ENCODE measurements at regions of chr20 and their contacts with region 1.

Region 1: GRCh38 chr20:25057234-25058050 is 497 bp downstream of the ACSS1 start:
- DNase-seq: peak; percentile 59 to 86 (median 78)
- ATAC-seq: peak; percentile 56 to 59
- H3K4me3 Mint-ChIP-seq: peak overlapping the region; percentile 82 to 93 (median 87)
- H3K27ac Mint-ChIP-seq: peak overlapping the region; percentile 86 to 96 (median 92)
- H3K4me1 Mint-ChIP-seq: peaks cover 27 to 58% (median 53%) of the 10 kb centered on the region in 4 donors
- H3K27me3 Mint-ChIP-seq: no peaks in the 10 kb centered on the region

Region 2: DNA sequence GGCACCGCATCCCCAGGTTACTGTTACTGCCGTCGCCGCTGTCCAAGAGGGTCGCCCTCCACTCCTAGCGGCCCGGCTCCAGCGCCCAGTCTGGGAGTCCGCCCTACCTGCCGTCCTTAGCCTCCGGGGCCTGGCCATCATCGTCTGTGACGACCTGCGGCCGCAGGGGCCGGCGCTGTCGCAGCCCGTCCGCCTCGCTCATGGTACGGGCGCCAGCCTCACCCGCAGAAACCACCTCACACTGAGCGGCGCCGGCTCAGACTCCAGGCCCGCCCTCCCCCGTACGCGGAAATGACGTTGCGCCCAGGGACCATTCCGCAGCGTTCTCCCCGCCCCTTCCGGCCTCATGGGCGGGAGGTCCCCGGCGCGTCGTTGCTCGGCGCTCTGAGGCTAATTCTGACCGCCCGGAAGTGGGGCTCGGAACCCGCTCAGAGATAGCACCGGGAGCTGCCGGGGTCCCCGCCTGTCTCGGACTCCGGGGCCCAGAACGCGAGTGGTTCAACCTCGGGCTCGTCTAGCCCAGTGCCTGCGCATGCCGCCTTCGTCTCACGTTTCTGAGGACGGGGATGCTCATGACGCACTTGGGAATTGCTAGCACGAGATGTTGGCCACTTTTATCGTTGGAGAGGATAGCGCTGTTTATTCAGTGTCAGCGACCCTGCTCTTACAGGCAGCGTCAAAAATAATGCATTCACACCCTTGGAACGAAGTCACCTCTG is 64.8 kb before region 1 on chr20 and contains the start of gene APMAP:
- POLR2A ChIA-PET with region 1: interaction called, 83 read pairs
- DNase-seq: peak; percentile 89 to 97 (median 95)
- ATAC-seq: peak; percentile 92 to 93
- H3K4me3 Mint-ChIP-seq: peak within 1 kb of the TSS; percentile 93 to 97 (median 96)
- H3K27ac Mint-ChIP-seq: peak within 1 kb of the TSS; percentile 93 to 99 (median 98)
- H3K4me1 Mint-ChIP-seq: peaks cover 36 to 72% (median 56%) of the 10 kb centered on the region in 4 donors
- H3K27me3 Mint-ChIP-seq: no peaks in the 10 kb centered on the region
- polyA plus RNA-seq, gene APMAP: 74.5 to 234 (median 81.7) TPM

Region 3: DNA sequence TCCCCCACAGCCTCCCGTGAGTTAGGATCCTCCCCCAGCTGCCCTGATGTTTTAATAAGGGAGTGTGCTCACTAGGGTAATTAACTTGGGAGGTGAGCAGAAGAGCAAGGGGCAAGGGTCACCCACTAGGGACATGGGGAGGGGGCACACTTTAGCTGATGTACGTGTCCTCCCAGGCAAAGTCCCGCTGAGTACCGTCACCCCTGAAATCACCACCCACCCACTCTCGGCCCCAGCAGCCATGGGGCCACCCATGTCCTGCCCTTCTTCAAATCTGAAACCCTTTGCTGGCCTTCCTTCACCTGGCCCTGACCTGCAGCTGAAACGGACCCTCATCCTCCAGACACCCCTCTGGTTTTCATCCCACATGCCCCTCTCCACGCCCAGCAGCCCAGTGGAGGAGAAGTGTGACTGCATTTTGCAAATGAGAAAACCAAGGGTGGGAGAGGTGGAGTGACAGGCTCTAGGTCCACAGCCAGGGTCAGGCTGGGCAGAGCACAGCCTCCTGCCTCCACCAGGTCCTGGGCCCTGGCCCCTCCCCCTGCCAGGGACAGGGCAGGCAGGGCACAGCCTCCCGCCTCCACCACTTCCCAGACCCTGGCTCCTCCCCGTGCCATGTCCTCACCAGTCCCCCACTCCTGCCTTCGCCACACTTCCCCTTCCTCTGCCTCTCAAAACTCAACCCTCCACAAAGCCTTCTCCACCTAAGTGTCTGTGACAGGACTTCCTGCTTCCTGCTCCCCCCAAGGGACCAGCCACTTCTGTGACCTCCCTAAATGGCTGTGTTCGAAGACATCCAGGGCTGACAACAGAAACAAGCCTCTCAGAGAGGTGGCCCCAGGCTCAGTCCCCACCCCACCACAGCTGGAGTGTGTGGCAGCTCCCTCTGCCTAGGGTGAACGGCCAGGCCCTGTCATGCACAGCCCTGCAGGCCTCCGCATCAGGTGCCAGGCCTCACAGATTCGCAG is 14.6 kb before region 1 on chr20:
- POLR2A ChIA-PET with region 1: interaction called, 43 read pairs
- DNase-seq: peak; percentile 19 to 78 (median 62)
- ATAC-seq: peak; percentile 86 to 90
- H3K4me3 Mint-ChIP-seq: peak overlapping the region in 9 of 10 donors; percentile 66 to 87 (median 73)
- H3K27ac Mint-ChIP-seq: peak overlapping the region; percentile 93 to 98 (median 95)
- H3K4me1 Mint-ChIP-seq: peaks cover 16 to 61% (median 45%) of the 10 kb centered on the region in 4 donors
- H3K27me3 Mint-ChIP-seq: no peaks in the 10 kb centered on the region

Region 4: DNA sequence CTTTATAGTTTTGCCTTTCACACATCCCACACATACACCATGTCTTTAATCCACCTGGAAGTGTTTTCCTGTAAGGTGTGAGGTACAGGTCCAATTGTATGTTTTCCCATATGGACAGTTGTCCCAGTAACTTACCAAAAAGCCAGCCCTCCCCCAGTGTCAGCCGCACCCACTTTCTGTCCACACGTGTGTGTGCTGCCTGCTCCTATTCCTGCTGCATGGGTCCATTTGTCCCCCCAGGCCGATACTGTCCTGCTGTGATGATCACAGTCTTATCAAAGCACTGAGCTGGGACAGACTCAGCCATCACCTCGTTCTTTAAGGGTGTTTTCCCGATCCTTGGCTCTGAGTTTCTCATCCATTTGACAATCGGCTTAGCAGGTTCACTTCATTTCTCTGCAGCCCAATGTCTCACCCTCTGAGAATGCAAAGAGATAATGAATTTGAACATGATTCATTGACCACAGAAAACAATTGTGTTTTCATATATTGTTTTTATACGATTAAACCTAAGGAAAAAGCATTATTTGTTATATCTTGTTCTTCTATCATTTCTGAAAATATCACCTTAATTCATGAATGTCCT is 14.9 kb after region 1 on chr20:
- POLR2A ChIA-PET with region 1: no interaction called
- DNase-seq: no peak
- ATAC-seq: no peak
- H3K4me3 Mint-ChIP-seq: no peak overlapping the region
- H3K27ac Mint-ChIP-seq: no peak overlapping the region
- H3K4me1 Mint-ChIP-seq: peaks cover 0 to 7% (median 6%) of the 10 kb centered on the region in 4 donors
- H3K27me3 Mint-ChIP-seq: peaks cover 38 to 64% (median 52%) of the 10 kb centered on the region in 5 donors

Region 5: GRCh38 chr20:25195014-25195961 is 137.8 kb after region 1 on chr20 and contains the start of gene ENTPD6:
- POLR2A ChIA-PET with region 1: interaction called, 27 read pairs
- DNase-seq: peak; percentile 90 to 98 (median 96)
- ATAC-seq: peak; percentile 73 to 77
- H3K4me3 Mint-ChIP-seq: peak within 1 kb of the TSS; percentile 86 to 95 (median 92)
- H3K27ac Mint-ChIP-seq: peak within 1 kb of the TSS; percentile 78 to 98 (median 97)
- H3K4me1 Mint-ChIP-seq: peaks cover 29 to 57% (median 48%) of the 10 kb centered on the region in 4 donors
- H3K27me3 Mint-ChIP-seq: peaks cover 0 to 1% (median 0%) of the 10 kb centered on the region in 5 donors
- polyA plus RNA-seq, gene ENTPD6: 39.9 to 50.5 (median 44.7) TPM

Region 6: GRCh38 chr20:25254986-25255680 is 197.7 kb after region 1 on chr20:
- POLR2A ChIA-PET with region 1: interaction called, 12 read pairs
- DNase-seq: peak in 1 of 10 donors; percentile 47
- ATAC-seq: no peak
- H3K4me3 Mint-ChIP-seq: peak overlapping the region in 1 of 10 donors; percentile 20
- H3K27ac Mint-ChIP-seq: peak overlapping the region in 9 of 10 donors; percentile 39 to 93 (median 67)
- H3K4me1 Mint-ChIP-seq: peaks cover 38 to 87% (median 77%) of the 10 kb centered on the region in 4 donors
- H3K27me3 Mint-ChIP-seq: no peaks in the 10 kb centered on the region